IMR-90 (cell line): ENCODE measurements at regions of chr2 and their contacts with region 1.

Region 1: DNA sequence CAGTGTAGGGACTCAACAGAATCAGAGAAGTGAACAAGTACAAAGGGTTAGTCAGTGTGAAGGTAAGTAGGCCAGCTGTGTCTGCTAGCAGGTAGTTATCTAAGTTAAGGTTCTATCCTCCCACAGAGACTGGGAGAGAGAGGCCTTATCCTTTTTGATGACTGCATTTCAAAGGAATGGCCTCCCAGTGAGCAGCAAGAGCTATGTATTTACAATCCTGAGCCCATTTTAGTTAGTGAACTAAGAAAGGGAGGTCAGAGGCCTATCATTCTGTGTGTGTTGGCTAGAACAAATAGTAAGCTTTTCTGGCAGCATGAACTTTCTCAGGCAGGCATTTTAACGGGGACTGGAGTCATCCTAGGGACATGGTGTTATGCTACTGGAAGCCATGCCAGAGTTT is 182.9 kb downstream of the VWC2L start:
- DNase-seq: peak; percentile 93
- ATAC-seq: peak; percentile 99
- H3K4me3 ChIP-seq: no peak overlapping the region
- H3K27ac ChIP-seq: no peak overlapping the region
- H3K4me1 ChIP-seq: no peaks in the 10 kb centered on the region; the same call in 1 of the 2 replicates
- H3K27me3 ChIP-seq: no peaks in the 10 kb centered on the region
- CTCF ChIP-seq: no peak
- POLR2A ChIP-seq: no peak
- RAD21 ChIP-seq: no peak

Region 2: DNA sequence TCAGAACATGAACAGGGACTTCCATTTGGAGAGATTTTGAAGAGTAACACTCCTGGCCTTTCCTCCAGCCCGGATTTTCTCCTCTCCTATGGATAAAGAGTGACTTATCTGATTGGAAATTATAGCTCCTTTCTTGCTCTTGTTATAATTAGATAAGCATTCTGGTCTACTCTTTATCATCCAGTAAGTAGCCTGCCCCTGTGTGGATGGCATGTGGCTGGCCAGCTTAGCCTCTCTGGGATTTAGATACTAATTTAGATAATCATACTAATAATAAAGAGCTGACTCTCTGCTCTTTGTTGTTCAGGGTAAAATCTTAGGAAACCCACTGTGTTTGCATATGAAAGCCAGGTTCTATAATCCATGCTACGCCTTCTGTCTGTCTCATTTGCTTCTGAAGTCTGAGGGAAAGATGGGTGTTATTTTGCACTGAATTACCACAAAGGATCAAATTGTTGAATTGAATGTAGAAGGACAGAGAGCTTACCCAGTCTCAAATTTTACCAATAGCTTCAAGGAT is 870.6 kb before region 1 on chr2:
- CTCF ChIA-PET with region 1: no interaction called
- POLR2A ChIA-PET with region 1: no interaction called
- dilution Hi-C with region 1: no loop called
- in situ Hi-C with region 1: no loop called
- intact Hi-C with region 1: no loop called
- DNase-seq: no peak
- ATAC-seq: no peak
- H3K4me3 ChIP-seq: no peak overlapping the region
- H3K27ac ChIP-seq: no peak overlapping the region
- H3K4me1 ChIP-seq: no peaks in the 10 kb centered on the region
- H3K27me3 ChIP-seq: no peaks in the 10 kb centered on the region
- CTCF ChIP-seq: no peak
- POLR2A ChIP-seq: no peak
- RAD21 ChIP-seq: no peak

Region 3: DNA sequence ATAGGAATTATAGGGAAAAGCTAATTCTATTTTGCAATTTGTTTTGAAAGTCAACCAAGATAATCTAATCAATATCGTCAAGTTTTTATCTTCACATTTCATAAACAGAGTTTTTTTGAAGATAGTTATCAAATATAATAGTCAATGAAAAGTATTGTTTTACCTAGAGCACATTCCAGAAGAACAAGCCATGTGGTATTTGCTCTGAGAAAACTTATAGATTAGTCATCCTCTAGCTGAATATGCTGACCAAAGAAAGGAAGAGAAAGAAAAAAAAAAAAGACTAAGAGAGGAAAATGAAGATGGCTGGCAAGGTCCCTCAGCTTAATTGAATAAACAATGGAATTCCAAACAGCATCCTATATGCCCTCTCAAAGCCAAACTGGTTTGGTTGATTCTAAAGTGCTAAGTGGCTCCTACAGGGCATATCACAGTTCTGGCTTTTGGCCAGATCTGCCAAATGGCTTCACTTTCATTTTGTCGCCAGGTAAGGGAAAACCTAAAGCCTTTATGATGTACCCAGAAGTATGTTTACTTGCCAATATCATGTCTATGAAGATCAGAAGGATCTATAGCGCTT is 50.3 kb before region 1 on chr2:
- CTCF ChIA-PET with region 1: no interaction called
- POLR2A ChIA-PET with region 1: no interaction called
- dilution Hi-C with region 1: no loop called
- in situ Hi-C with region 1: no loop called
- intact Hi-C with region 1: loop called (anchors 5 kb)
- DNase-seq: peak; percentile 66
- ATAC-seq: peak; percentile 65
- H3K4me3 ChIP-seq: no peak overlapping the region
- H3K27ac ChIP-seq: peak overlapping the region; percentile 37; the same call in 1 of the 2 replicates
- H3K4me1 ChIP-seq: peaks cover 6% of the 10 kb centered on the region
- H3K27me3 ChIP-seq: no peaks in the 10 kb centered on the region
- CTCF ChIP-seq: no peak
- POLR2A ChIP-seq: no peak
- RAD21 ChIP-seq: no peak